ENCODE measurements at regions of chr2 and their contacts with region 1.

Region 1: DNA sequence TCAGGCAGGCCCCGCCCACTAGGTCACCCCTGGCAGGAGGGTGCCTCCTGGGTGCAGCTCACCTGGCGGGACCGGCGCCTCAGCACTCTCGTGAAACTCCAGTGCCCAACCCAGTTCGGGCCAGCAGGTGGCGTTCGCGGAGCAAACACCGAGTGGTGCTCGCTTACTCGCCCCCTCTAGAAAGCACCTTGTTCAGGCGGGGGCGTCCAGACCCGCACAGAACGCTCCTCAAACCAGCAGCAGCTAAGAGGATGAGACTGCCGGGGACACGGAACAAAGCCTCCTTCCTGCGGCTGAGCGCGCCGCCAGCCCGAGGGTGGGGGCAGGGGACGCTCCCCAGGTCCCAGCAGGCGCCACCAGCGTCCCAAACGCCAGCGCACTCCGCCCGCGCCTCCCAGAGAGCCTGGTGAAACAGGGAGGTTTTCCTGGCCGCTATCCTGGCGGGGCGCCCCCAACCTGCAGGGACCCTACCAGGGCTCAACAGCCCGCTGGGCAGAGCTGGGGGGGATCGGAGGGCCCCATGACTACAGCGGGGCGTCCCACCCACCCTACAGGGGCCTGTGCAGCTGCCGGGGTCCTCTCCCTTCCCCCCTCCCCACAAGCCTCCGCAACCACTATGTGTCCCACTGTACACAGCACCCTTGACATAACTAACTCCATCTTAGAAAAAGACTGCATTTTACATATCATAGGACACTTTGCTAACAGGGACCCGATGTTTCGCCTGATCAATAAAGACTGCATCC is 44.7 kb downstream of the MRPS5 start:
- DNase-seq: peak; percentile 69
- H3K4me3 ChIP-seq: no peak overlapping the region
- H3K27ac ChIP-seq: no peak overlapping the region
- H3K4me1 ChIP-seq: peaks cover 16% of the 10 kb centered on the region
- CTCF ChIP-seq: peak; percentile 81

Region 2: GRCh38 chr2:95115418-95115817 is 38.5 kb after region 1 on chr2:
- CTCF ChIA-PET with region 1: no interaction called
- POLR2A ChIA-PET with region 1: interaction called, 4 read pairs
- intact Hi-C with region 1: loop called (anchors 5 kb)
- DNase-seq: peak; percentile 57
- H3K4me3 ChIP-seq: no peak overlapping the region
- H3K27ac ChIP-seq: no peak overlapping the region
- H3K4me1 ChIP-seq: peaks cover 16% of the 10 kb centered on the region
- CTCF ChIP-seq: peak; percentile 82

Region 3: GRCh38 chr2:95207111-95207961 is 130.4 kb after region 1 on chr2 and contains the start of gene ZNF892:
- CTCF ChIA-PET with region 1: no interaction called
- POLR2A ChIA-PET with region 1: no interaction called
- intact Hi-C with region 1: loop called (anchors 2 kb)
- DNase-seq: peak; percentile 88
- H3K4me3 ChIP-seq: peak within 1 kb of the TSS; percentile 83
- H3K27ac ChIP-seq: peak within 1 kb of the TSS; percentile 32
- H3K4me1 ChIP-seq: peaks cover 4% of the 10 kb centered on the region
- CTCF ChIP-seq: peak; percentile 63
- total RNA-seq, gene ZNF892: 3.1 and 4.7 TPM in 2 replicates

Measured in OCI-LY7 (cell line).